ENCODE measurements at regions of chr6 and their contacts with region 1.

Region 1: GRCh38 chr6:53171605-53172446 is 23.2 kb upstream of the GCM1 start:
- DNase-seq: peak; percentile 91
- ATAC-seq: peak; percentile 98
- H3K4me3 Mint-ChIP-seq: peak overlapping the region; percentile 68
- H3K27ac Mint-ChIP-seq: peak overlapping the region; percentile 87
- H3K4me1 Mint-ChIP-seq: peaks cover 24% of the 10 kb centered on the region
- H3K27me3 Mint-ChIP-seq: no peaks in the 10 kb centered on the region
- CTCF ChIP-seq: peak; percentile 100

Region 2: DNA sequence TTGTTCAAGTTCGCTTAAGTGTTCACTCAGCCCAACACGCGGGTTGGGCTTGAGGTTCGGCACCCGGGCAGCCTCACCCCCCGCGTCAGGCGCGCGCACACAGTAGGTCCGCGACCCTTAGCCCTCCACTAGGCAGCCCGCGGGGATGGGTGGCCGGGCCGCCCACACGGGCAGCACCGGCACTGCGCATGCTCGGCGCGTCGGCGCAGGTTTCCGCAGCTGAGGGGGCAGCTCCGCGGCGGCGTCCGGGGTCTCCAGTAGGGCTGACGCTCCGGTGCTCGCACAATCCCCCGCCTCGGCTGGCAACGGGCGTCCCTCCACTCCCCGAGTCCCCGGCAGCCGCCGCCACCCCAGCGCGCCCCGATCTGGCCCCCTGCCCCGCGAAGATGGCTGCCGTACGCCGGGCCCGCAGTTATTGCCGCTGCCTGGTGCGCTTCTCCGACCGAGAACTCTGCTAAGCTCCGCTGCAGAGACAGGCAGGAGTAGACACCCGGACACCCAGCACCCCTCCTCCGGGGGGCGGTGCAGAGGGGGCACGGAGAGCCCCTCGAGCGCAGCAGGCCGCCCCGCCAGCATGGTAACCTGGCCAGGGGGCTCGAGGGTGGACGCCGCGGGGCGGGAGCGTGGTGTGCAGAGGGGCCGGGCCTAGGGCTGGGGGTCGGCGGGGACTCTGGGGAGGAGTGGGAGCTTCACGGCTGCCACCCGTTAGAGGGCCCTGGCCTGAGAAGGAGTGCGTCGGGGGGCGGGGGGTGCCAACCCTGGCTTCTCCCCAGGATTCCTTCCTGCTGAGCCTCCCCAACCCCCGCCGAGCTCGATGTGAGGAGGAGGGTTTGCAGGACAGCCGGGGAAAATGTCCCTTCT is 106.4 kb before region 1 on chr6 and contains the start of gene FBXO9:
- CTCF ChIA-PET with region 1: no interaction called
- POLR2A ChIA-PET with region 1: no interaction called
- intact Hi-C with region 1: no loop called
- DNase-seq: peak; percentile 83
- ATAC-seq: peak; percentile 60
- H3K4me3 Mint-ChIP-seq: peak within 1 kb of the TSS; percentile 100
- H3K27ac Mint-ChIP-seq: peak within 1 kb of the TSS; percentile 99
- H3K4me1 Mint-ChIP-seq: peaks cover 51% of the 10 kb centered on the region
- H3K27me3 Mint-ChIP-seq: no peaks in the 10 kb centered on the region
- CTCF ChIP-seq: no peak
- total RNA-seq, gene FBXO9: 53.5 and 62.1 TPM in 2 replicates

Region 3: DNA sequence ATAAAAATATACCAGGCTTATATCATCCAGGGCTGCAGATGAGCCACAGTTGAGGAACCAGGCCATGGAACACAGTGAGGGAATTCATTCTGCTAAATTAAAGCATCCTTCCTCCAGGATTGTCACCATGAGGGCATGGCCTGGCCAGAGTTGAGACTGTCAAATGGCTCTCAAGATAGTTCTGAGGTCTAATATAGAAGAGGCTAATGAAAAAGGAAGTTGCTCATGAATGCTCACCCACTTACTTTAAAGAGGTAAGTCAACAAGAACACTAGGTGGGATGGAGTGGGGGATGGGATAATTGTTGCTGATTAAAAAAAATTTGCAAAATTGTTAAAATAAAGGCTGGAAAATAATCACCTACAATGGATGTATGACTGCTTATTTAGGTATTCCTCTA is 48.8 kb after region 1 on chr6:
- CTCF ChIA-PET with region 1: no interaction called
- POLR2A ChIA-PET with region 1: no interaction called
- intact Hi-C with region 1: no loop called
- DNase-seq: no peak
- ATAC-seq: no peak
- H3K4me3 Mint-ChIP-seq: no peak overlapping the region
- H3K27ac Mint-ChIP-seq: peak overlapping the region; percentile 69
- H3K4me1 Mint-ChIP-seq: peaks cover 57% of the 10 kb centered on the region
- H3K27me3 Mint-ChIP-seq: no peaks in the 10 kb centered on the region
- CTCF ChIP-seq: no peak

Region 4: GRCh38 chr6:53233309-53233708 is 61.5 kb after region 1 on chr6:
- CTCF ChIA-PET with region 1: interaction called, 4 read pairs
- POLR2A ChIA-PET with region 1: interaction called, 6 read pairs
- intact Hi-C with region 1: loop called (anchors 1 kb)
- DNase-seq: no peak
- ATAC-seq: no peak
- H3K4me3 Mint-ChIP-seq: no peak overlapping the region
- H3K27ac Mint-ChIP-seq: peak overlapping the region; percentile 97
- H3K4me1 Mint-ChIP-seq: peaks cover 80% of the 10 kb centered on the region
- H3K27me3 Mint-ChIP-seq: no peaks in the 10 kb centered on the region
- CTCF ChIP-seq: no peak

Region 5: GRCh38 chr6:53294095-53294494 is 122.3 kb after region 1 on chr6:
- CTCF ChIA-PET with region 1: interaction called, 106 read pairs
- POLR2A ChIA-PET with region 1: interaction called, 5 read pairs
- intact Hi-C with region 1: loop called (anchors 1 kb)
- DNase-seq: no peak
- ATAC-seq: peak; percentile 62
- H3K4me3 Mint-ChIP-seq: no peak overlapping the region
- H3K27ac Mint-ChIP-seq: peak overlapping the region; percentile 80
- H3K4me1 Mint-ChIP-seq: peaks cover 89% of the 10 kb centered on the region
- H3K27me3 Mint-ChIP-seq: no peaks in the 10 kb centered on the region
- CTCF ChIP-seq: peak; percentile 26

Region 6: DNA sequence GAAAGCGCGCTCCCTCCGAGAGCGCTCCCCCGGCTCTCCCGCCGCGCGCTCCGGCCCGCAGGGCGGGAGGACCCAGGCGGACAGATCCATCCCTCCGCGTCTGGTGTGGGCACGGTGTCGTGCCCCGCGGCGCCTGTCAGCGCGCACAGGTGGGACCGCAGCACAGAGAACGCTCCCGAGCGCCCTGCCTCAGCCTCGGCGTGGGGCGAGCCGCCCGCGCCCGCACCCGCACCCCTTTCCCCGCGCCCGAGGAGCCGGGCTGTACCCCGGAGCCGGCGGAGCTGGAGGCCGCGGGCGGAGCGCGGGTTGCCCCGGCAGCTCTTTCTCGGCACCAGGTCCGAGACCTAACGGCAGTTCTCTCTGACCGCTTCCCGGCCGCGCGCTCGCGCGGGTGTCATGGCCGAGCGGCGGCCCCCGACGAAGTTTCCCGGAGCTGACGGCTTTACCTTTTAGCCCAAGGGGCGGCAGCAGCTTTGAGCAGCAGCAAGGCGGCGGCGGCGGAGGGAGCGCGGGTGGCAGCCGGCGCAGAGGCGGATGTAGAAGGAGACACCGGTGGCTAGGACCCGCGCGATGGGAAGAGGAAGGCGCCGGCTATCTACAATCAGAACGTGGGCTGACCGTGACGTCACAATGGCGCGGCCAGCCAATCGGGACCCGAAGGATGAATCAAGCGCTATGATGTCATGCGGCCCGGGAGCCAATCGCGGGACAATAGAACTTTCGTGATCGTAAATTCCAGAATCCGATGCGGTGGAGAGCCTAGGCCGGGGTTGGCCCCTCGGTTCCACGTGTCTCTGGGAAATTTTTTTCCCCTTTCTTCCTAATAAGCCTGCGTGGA is 176.8 kb after region 1 on chr6 and contains the start of gene ELOVL5:
- CTCF ChIA-PET with region 1: interaction called, 18 read pairs
- POLR2A ChIA-PET with region 1: interaction called, 16 read pairs
- intact Hi-C with region 1: loop called (anchors 1 kb)
- DNase-seq: peak; percentile 92
- ATAC-seq: peak; percentile 78
- H3K4me3 Mint-ChIP-seq: peak within 1 kb of the TSS; percentile 94
- H3K27ac Mint-ChIP-seq: peak within 1 kb of the TSS; percentile 97
- H3K4me1 Mint-ChIP-seq: peaks cover 52% of the 10 kb centered on the region
- H3K27me3 Mint-ChIP-seq: no peaks in the 10 kb centered on the region
- CTCF ChIP-seq: no peak
- total RNA-seq, gene ELOVL5: 109 and 127 TPM in 2 replicates

Region 7: GRCh38 chr6:53461041-53461656 is 289.3 kb after region 1 on chr6:
- CTCF ChIA-PET with region 1: no interaction called
- POLR2A ChIA-PET with region 1: no interaction called
- intact Hi-C with region 1: loop called (anchors 1 kb)
- DNase-seq: no peak
- ATAC-seq: peak; percentile 72
- H3K4me3 Mint-ChIP-seq: peak overlapping the region; percentile 72
- H3K27ac Mint-ChIP-seq: peak overlapping the region; percentile 96
- H3K4me1 Mint-ChIP-seq: peaks cover 94% of the 10 kb centered on the region
- H3K27me3 Mint-ChIP-seq: no peaks in the 10 kb centered on the region
- CTCF ChIP-seq: no peak

Region 8: DNA sequence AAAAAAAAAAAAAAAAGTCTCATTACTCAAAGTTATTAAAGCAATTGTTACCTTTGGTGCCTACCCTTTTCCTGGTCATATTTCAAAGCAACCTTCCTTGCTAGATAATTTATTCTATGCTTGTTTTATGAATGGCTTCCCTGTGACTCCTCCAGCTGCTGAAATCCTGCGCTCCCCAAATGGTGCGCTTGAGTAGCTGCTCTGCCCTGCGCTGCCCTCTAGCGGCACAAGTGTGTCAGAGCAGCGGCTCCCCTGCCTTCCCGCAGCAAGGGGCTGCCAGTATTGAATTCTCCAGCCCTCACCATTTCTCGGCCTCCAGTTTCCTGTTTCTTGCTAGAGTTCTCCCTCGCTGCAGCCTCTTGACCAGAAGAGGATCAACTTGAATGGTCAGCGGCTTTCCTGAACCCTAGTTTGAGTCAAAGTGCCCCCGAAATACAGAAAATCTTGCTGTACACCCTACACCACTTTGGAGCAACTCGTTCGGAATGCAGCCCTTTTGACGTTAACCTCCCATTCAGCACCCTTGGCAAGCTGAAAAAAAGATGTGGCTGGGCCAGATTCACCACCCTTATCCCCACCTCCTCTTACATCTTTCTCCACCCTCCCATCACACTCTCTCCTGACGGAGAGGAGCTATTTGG is 554.1 kb after region 1 on chr6:
- CTCF ChIA-PET with region 1: interaction called, 7 read pairs
- POLR2A ChIA-PET with region 1: no interaction called
- intact Hi-C with region 1: loop called (anchors 5 kb)
- DNase-seq: peak; percentile 63
- ATAC-seq: peak; percentile 87
- H3K4me3 Mint-ChIP-seq: no peak overlapping the region
- H3K27ac Mint-ChIP-seq: no peak overlapping the region
- H3K4me1 Mint-ChIP-seq: peaks cover 5% of the 10 kb centered on the region
- H3K27me3 Mint-ChIP-seq: peaks cover 9% of the 10 kb centered on the region
- CTCF ChIP-seq: peak; percentile 97